HCT116 (cell line): ENCODE measurements at regions of chr11 and their contacts with region 1.

Region 1: GRCh38 chr11:128831174-128832120 is 35.6 kb downstream of the KCNJ1 start:
- DNase-seq: peak; percentile 68
- ATAC-seq: peak; percentile 95
- H3K4me3 ChIP-seq: no peak overlapping the region
- H3K27ac ChIP-seq: no peak overlapping the region
- H3K4me1 ChIP-seq: no peaks in the 10 kb centered on the region
- H3K27me3 ChIP-seq: no peaks in the 10 kb centered on the region; the same call in 1 of the 2 replicates
- CTCF ChIP-seq: peak; percentile 80 to 87 (median 86)
- POLR2A ChIP-seq: no peak
- RAD21 ChIP-seq: peak; percentile 90

Region 2: GRCh38 chr11:128026596-128026995 is 804.9 kb before region 1 on chr11:
- CTCF ChIA-PET with region 1: interaction called, 5 read pairs
- POLR2A ChIA-PET with region 1: no interaction called
- RAD21 ChIA-PET with region 1: no interaction called
- intact Hi-C with region 1: loop called (anchors 1 kb)
- DNase-seq: no peak
- ATAC-seq: no peak
- H3K4me3 ChIP-seq: no peak overlapping the region
- H3K27ac ChIP-seq: no peak overlapping the region
- H3K4me1 ChIP-seq: no peaks in the 10 kb centered on the region
- H3K27me3 ChIP-seq: no peaks in the 10 kb centered on the region
- CTCF ChIP-seq: no peak
- POLR2A ChIP-seq: no peak
- RAD21 ChIP-seq: no peak

Region 3: DNA sequence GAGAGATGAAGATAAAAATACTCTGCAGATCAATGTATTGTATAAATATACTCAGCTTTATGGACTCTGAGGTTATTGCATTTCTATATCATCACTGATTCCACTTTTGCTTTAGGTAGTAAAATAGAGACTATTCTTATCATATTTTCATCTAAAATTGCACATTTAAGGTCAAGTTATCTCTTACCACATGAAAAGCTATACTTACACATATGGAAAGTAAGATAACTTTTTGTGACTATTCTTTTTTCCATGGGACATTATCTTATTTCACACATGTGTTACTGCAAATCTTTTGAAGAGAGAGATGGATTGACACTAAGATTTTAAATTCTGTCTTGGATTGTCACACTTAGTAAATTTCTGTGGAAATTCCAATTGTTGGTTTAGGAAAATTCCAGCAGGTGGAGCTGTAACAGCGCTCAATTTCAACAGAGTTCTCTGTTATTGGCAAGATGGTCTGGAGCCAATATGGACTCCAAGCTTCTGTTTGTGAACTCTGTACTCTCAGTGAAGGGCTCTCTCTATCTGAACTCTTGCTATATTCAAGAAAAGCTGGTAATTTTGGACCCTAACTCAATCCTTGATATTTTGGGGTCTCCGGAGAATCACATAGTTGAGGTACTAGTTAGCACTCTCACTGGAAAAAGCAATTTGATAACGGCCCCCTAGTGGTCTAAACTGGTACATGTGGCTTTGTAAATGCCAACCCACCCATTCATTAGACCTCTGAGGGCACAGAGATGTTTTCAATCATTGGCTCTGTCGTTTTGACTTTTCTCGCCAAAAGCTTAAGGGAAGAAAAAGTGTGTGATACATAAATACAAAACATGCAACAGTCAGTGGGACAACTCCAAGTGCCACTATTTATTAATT is 673.8 kb before region 1 on chr11:
- CTCF ChIA-PET with region 1: interaction called, 24 read pairs
- POLR2A ChIA-PET with region 1: no interaction called
- RAD21 ChIA-PET with region 1: interaction called in 1 of 2 experiments, 5 read pairs
- intact Hi-C with region 1: loop called (anchors 1 kb)
- DNase-seq: peak; percentile 72
- ATAC-seq: peak; percentile 90
- H3K4me3 ChIP-seq: no peak overlapping the region
- H3K27ac ChIP-seq: no peak overlapping the region
- H3K4me1 ChIP-seq: no peaks in the 10 kb centered on the region; a peak in 1 of 4 replicates
- H3K27me3 ChIP-seq: peaks cover 18% of the 10 kb centered on the region; the same call in 1 of the 2 replicates
- CTCF ChIP-seq: peak; percentile 73 to 99 (median 94)
- POLR2A ChIP-seq: no peak
- RAD21 ChIP-seq: peak; percentile 78

Region 4: GRCh38 chr11:128290106-128290840 is 541.2 kb before region 1 on chr11:
- CTCF ChIA-PET with region 1: no interaction called
- POLR2A ChIA-PET with region 1: no interaction called
- RAD21 ChIA-PET with region 1: no interaction called
- intact Hi-C with region 1: loop called (anchors 5 kb)
- DNase-seq: peak; percentile 46
- ATAC-seq: peak; percentile 95
- H3K4me3 ChIP-seq: no peak overlapping the region
- H3K27ac ChIP-seq: no peak overlapping the region
- H3K4me1 ChIP-seq: no peaks in the 10 kb centered on the region
- H3K27me3 ChIP-seq: peaks cover 21% of the 10 kb centered on the region; the same call in 1 of the 2 replicates
- CTCF ChIP-seq: peak; percentile 67 to 81 (median 80)
- POLR2A ChIP-seq: no peak
- RAD21 ChIP-seq: peak; percentile 90

Region 5: DNA sequence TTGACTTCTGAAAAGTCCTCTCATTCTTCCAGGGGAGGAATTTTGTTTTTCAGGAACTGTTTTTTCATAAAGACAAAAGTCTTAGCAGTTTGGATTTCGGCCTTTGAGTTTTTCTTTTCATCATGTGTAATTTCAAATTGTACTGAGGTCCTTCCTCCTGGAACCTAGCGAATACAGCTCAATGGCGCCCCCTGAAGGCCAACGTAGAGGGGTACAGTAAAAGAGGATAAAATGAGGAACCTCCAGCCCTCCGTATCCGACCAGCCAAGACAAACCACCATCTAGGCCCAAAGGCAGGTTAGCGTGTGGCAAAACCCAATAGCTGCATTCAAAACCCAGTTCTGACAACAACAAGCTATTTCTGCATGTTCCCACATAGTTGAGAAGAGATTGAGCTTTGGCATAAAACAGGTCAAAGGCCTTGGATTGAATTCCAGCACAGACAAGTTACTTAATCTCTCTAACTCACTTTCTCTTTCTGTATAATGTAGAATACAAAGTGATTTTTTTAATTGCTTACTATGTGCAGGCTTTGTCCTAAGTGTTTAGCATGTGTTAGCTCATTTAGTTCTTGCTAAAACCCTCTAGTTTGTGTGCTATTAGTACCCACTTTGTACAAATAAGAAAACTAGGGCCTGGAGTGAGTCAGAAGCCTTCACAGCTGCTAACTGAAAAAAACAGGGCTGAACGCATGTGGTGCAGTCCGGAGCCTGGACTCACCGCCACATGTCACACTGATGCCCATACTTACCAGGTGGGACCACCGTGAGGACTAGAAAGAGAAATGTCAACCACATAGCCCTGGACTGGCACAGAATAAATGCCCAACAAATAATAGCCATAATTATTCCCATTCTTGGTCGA is 200.8 kb before region 1 on chr11:
- CTCF ChIA-PET with region 1: interaction called, 12 read pairs
- POLR2A ChIA-PET with region 1: no interaction called
- RAD21 ChIA-PET with region 1: interaction called, 3 to 4 read pairs
- intact Hi-C with region 1: loop called (anchors 1 kb)
- DNase-seq: peak; percentile 56
- ATAC-seq: peak; percentile 87
- H3K4me3 ChIP-seq: no peak overlapping the region
- H3K27ac ChIP-seq: no peak overlapping the region
- H3K4me1 ChIP-seq: no peaks in the 10 kb centered on the region
- H3K27me3 ChIP-seq: no peaks in the 10 kb centered on the region; the same call in 1 of the 2 replicates
- CTCF ChIP-seq: peak; percentile 79 to 95 (median 89)
- POLR2A ChIP-seq: no peak
- RAD21 ChIP-seq: peak; percentile 93